ENCODE measurements at regions of chr4 and their contacts with region 1.

Region 1: GRCh38 chr4:125323654-125324053 is 8.9 kb downstream of the FAT4 start:
- DNase-seq: no peak
- H3K4me3 ChIP-seq: peak overlapping the region; percentile 7 to 32 (median 18)
- H3K27ac ChIP-seq: no peak overlapping the region
- H3K4me1 ChIP-seq: peaks cover 26 to 74% (median 67%) of the 10 kb centered on the region in 4 donors
- H3K27me3 ChIP-seq: no peaks in the 10 kb centered on the region
- CTCF ChIP-seq: no peak
- EP300 ChIP-seq: no peak
- POLR2A ChIP-seq: no peak

Region 2: DNA sequence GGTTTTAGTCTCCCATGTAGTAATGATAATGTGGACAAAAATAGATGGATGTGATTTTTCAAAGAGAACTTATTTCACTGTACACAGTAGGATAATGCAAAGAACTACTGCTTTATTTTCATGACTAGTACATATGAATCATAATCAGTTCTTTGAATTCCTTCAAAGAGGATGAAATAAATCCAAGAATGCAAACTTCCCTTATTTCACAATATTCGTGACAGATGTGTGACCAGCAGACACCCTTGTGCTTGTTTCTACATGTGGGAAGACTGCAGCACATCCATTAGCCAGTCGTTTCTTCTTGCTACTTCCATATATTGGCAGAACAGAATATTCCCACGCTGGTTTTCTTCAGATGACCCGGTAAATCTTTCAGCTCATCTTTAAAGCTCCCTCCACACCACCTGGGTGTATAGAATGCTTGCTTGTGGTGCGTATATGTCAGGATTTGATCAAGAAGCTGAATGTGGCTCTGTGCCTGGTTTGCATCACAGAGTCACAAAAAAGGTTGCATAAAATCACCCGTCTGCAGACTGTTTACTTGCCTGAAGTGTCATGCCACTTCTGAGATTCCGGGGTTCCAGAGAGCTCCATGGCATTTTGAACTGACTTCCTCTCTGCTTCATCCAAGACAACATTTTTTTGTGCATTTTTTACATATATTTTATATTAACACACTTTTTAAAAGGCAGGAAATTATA is 56.6 kb before region 1 on chr4:
- intact Hi-C with region 1: no loop called
- DNase-seq: no peak
- H3K4me3 ChIP-seq: no peak overlapping the region
- H3K27ac ChIP-seq: no peak overlapping the region
- H3K4me1 ChIP-seq: no peaks in the 10 kb centered on the region
- H3K27me3 ChIP-seq: no peaks in the 10 kb centered on the region
- CTCF ChIP-seq: no peak
- EP300 ChIP-seq: no peak
- POLR2A ChIP-seq: no peak

Region 3: DNA sequence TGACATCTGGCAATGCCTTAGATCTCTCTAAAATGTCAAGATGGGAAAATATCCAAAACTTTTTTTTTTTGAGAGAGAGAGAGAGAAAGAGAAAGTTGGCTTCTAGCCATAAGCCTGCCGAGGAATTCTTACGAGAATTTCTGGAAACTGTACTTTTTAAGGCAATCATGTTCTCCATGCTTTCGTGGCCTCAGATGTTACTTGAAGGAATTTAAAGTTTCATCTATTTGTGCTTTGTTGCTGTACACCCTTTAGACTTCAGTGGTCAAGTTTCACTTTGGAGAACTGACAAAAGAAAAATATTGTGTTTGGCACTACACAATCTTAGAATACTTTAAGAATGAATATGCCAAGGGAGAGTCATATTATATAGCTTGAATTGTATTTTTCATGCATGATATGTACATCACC is 45.0 kb after region 1 on chr4:
- intact Hi-C with region 1: loop called (anchors 5 kb)
- DNase-seq: no peak
- H3K4me3 ChIP-seq: peak overlapping the region; percentile 35 to 53 (median 47)
- H3K27ac ChIP-seq: peak overlapping the region; percentile 13 to 63 (median 52)
- H3K4me1 ChIP-seq: peaks cover 5 to 26% (median 21%) of the 10 kb centered on the region in 4 donors
- H3K27me3 ChIP-seq: no peaks in the 10 kb centered on the region
- CTCF ChIP-seq: no peak
- EP300 ChIP-seq: no peak
- POLR2A ChIP-seq: no peak

Region 4: DNA sequence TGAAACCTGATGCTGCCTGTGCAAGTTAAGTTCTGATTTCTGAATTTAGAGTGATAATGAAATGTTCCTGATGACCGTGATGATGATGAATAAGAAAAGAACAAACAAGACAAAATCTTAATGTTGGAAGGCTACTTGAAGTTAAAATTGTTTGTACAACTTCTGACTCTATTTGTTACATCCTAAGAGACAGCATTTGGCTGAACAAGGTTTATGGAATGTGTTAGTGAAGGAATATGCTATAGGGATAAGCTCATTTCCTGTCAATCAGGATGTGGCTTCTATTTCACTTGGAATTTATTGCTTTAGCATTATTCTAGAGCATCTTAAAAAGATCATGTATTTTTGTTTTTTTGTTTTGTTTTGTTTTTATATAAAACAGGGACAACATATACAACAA is 258.6 kb after region 1 on chr4:
- intact Hi-C with region 1: no loop called
- DNase-seq: no peak
- H3K4me3 ChIP-seq: no peak overlapping the region
- H3K27ac ChIP-seq: no peak overlapping the region
- H3K4me1 ChIP-seq: no peaks in the 10 kb centered on the region
- H3K27me3 ChIP-seq: no peaks in the 10 kb centered on the region
- CTCF ChIP-seq: no peak
- EP300 ChIP-seq: no peak
- POLR2A ChIP-seq: no peak

Measured in esophagus muscularis mucosa (tissue), 4 donors.